ENCODE measurements at regions of chr12 and their contacts with region 1.

Region 1: GRCh38 chr12:116559162-116559935 is at the start of gene MAP1LC3B2:
- DNase-seq: peak; percentile 85
- H3K4me3 Mint-ChIP-seq: peak within 1 kb of the TSS; percentile 65
- H3K27ac Mint-ChIP-seq: peak within 1 kb of the TSS; percentile 94
- H3K4me1 Mint-ChIP-seq: peaks cover 38% of the 10 kb centered on the region
- H3K27me3 Mint-ChIP-seq: peaks cover 6% of the 10 kb centered on the region
- total RNA-seq, gene MAP1LC3B2: 0.49 and 0.57 TPM in 2 replicates

Region 2: DNA sequence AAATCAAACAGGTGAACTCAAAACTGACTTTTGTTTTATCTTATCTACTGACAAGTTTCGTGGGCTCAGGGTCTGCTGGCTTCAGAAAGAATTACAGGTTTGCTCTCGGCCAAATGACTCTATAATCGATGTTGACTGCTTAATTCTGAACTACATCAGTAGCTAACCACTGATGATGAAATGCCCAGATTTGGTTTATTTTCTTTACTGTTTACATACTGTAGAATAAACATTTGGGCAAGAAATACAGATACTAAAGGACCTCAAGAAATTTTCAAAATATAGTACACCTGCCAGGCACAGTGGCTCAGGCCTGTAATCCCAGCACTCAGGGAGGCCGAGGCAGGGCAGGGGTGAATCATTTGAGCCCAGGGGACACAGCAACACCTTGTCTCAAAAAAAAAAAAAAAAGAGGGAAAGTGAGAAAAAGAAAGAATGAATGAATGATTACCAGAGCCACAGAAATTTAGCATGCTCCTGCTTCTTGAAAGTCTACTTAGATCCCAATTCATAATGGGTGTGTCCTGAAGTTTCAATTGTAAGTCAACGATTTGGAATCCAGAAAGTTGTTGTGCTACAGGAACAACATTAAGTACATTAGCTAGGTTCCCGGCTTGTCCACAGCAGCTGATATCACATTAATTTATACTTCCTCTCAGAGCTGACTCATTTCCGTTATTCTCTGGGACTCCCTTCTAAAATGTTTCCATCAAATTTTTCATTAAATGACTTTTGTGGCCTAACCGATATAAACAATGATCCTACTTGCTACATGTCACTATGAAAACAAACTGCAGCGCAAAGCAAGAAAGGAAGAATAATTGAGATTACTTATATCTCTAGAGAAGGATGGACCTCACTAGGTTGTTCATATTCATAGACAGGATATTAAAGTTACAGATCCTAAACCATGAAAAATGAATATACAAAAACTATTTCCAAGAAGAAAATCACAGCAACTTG is 416.1 kb before region 1 on chr12:
- intact Hi-C with region 1: loop called (anchors 2 kb)
- DNase-seq: no peak
- H3K4me3 Mint-ChIP-seq: peak overlapping the region; percentile 45
- H3K27ac Mint-ChIP-seq: peak overlapping the region; percentile 81
- H3K4me1 Mint-ChIP-seq: peaks cover 52% of the 10 kb centered on the region
- H3K27me3 Mint-ChIP-seq: no peaks in the 10 kb centered on the region

Region 3: GRCh38 chr12:116358893-116359761 is 200.2 kb before region 1 on chr12:
- intact Hi-C with region 1: loop called (anchors 1 kb)
- DNase-seq: peak; percentile 58
- H3K4me3 Mint-ChIP-seq: peak overlapping the region; percentile 56
- H3K27ac Mint-ChIP-seq: peak overlapping the region; percentile 85
- H3K4me1 Mint-ChIP-seq: peaks cover 33% of the 10 kb centered on the region
- H3K27me3 Mint-ChIP-seq: peaks cover 4% of the 10 kb centered on the region

Region 4: GRCh38 chr12:116539905-116540482 is 19.4 kb before region 1 on chr12:
- intact Hi-C with region 1: loop called (anchors 1 kb)
- DNase-seq: no peak
- H3K4me3 Mint-ChIP-seq: no peak overlapping the region
- H3K27ac Mint-ChIP-seq: no peak overlapping the region
- H3K4me1 Mint-ChIP-seq: peaks cover 37% of the 10 kb centered on the region
- H3K27me3 Mint-ChIP-seq: peaks cover 7% of the 10 kb centered on the region

Region 5: GRCh38 chr12:116673681-116674111 is 114.3 kb after region 1 on chr12:
- intact Hi-C with region 1: loop called (anchors 2 kb)
- DNase-seq: no peak
- H3K4me3 Mint-ChIP-seq: peak overlapping the region; percentile 34
- H3K27ac Mint-ChIP-seq: peak overlapping the region; percentile 55
- H3K4me1 Mint-ChIP-seq: peaks cover 49% of the 10 kb centered on the region
- H3K27me3 Mint-ChIP-seq: no peaks in the 10 kb centered on the region

Measured in activated T-helper 1 cell treated with anti-CD3 and anti-CD28 coated beads, Interleukin-12 subunit alpha, Interleukin-12 subunit beta, Interleukin-2, Interleukin-4 antibody, amounts not matched to agents 30 ng/mL and 10 ng/mL and 1 ng/mL, durations not matched to agents 14 hours and 24 hours and 36 hours (primary cell).